B cell (primary cell): ENCODE measurements at regions of chr17 and their contacts with region 1.

Region 1: GRCh38 chr17:63919311-63919723 is 678 bp upstream of the GH1 start:
- DNase-seq: peak; percentile 93
- ATAC-seq: peak; percentile 58
- H3K4me3 ChIP-seq: peak overlapping the region in 3 of 5 experiments; percentile 8 to 26 (median 19)
- H3K4me3 Mint-ChIP-seq: peak overlapping the region; percentile 87
- H3K27ac ChIP-seq: peak overlapping the region in 1 of 2 donors; percentile 18
- H3K27ac Mint-ChIP-seq: peak overlapping the region; percentile 86
- H3K4me1 ChIP-seq: peaks cover 68 to 83% of the 10 kb centered on the region in 2 donors
- H3K4me1 Mint-ChIP-seq: peaks cover 72% of the 10 kb centered on the region
- H3K27me3 ChIP-seq: no peaks in the 10 kb centered on the region
- H3K27me3 Mint-ChIP-seq: no peaks in the 10 kb centered on the region
- CTCF ChIP-seq: peak; percentile 88

Region 2: DNA sequence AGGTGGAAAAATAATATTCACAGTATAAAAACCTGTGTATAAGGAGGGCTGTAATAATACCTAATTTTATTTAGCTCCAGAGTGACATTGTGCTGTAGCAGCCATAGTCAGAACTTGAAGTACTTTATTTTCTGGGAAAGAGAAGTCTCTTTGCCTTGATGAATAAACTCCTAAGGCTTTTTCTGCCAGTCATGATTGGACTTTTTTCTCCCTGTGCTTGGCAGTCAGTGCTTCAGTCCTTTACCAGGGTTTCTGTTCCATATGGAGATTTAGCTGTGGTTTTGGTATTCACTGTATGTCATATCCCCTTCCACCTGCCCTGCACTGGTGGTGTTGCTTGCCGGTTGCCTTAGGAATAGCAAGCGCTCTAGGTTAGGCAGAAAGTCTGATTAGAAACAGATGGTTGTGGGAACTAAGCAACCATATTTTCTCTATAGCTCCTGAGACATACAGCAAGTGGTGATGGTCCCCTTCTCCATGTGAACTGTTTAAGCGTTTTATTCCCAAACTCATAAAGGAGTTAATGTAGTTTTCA is 120.7 kb before region 1 on chr17:
- CTCF ChIA-PET with region 1: no interaction called
- POLR2A ChIA-PET with region 1: no interaction called
- intact Hi-C with region 1: no loop called
- DNase-seq: no peak
- ATAC-seq: no peak
- H3K4me3 ChIP-seq: no peak overlapping the region
- H3K4me3 Mint-ChIP-seq: no peak overlapping the region
- H3K27ac ChIP-seq: no peak overlapping the region
- H3K27ac Mint-ChIP-seq: no peak overlapping the region
- H3K4me1 ChIP-seq: no peaks in the 10 kb centered on the region
- H3K4me1 Mint-ChIP-seq: no peaks in the 10 kb centered on the region
- H3K27me3 ChIP-seq: no peaks in the 10 kb centered on the region
- H3K27me3 Mint-ChIP-seq: no peaks in the 10 kb centered on the region
- CTCF ChIP-seq: no peak

Region 3: DNA sequence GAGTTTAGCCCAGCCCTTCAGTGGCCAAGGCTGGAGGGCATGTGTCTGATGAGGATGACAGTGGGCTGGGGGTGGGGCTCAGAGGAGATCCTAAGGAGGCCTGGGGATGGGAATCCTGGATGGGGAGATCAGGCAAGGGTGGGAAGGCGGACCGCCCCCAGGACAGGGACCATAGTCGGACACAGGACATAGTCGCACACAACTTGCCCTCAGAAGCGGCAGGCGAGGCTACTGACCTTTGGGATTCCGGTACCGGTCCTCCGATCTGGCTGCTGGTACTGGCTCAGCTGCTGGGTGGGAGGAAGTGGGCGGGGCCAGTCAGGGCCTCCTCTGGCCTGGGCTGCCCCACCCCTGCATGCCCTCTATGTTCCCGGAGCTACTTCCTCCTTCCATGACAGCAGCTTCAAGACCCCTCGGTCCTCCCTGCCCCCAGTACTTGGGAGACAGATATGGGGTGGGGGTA is 11.8 kb after region 1 on chr17:
- CTCF ChIA-PET with region 1: interaction called, 185 read pairs
- POLR2A ChIA-PET with region 1: interaction called, 68 read pairs
- intact Hi-C with region 1: loop called (anchors 1 kb)
- DNase-seq: peak; percentile 77
- ATAC-seq: peak; percentile 39
- H3K4me3 ChIP-seq: peak overlapping the region; percentile 80 to 100 (median 97)
- H3K4me3 Mint-ChIP-seq: peak overlapping the region; percentile 99
- H3K27ac ChIP-seq: peak overlapping the region; percentile 83 to 85
- H3K27ac Mint-ChIP-seq: peak overlapping the region; percentile 97
- H3K4me1 ChIP-seq: peaks cover 72 to 85% of the 10 kb centered on the region in 2 donors
- H3K4me1 Mint-ChIP-seq: peaks cover 86% of the 10 kb centered on the region
- H3K27me3 ChIP-seq: no peaks in the 10 kb centered on the region
- H3K27me3 Mint-ChIP-seq: no peaks in the 10 kb centered on the region
- CTCF ChIP-seq: no peak

Region 4: GRCh38 chr17:63946440-63947367 is 27.4 kb after region 1 on chr17:
- CTCF ChIA-PET with region 1: interaction called, 834 read pairs
- POLR2A ChIA-PET with region 1: interaction called, 360 read pairs
- intact Hi-C with region 1: loop called (anchors 1 kb)
- DNase-seq: peak; percentile 87
- ATAC-seq: peak; percentile 70
- H3K4me3 ChIP-seq: peak overlapping the region; percentile 20 to 59 (median 41)
- H3K4me3 Mint-ChIP-seq: peak overlapping the region; percentile 89
- H3K27ac ChIP-seq: peak overlapping the region; percentile 72 to 84
- H3K27ac Mint-ChIP-seq: peak overlapping the region; percentile 99
- H3K4me1 ChIP-seq: peaks cover 35 to 70% of the 10 kb centered on the region in 2 donors
- H3K4me1 Mint-ChIP-seq: peaks cover 46% of the 10 kb centered on the region
- H3K27me3 ChIP-seq: no peaks in the 10 kb centered on the region
- H3K27me3 Mint-ChIP-seq: no peaks in the 10 kb centered on the region
- CTCF ChIP-seq: peak; percentile 92

Region 5: GRCh38 chr17:63984651-63985386 is 65.5 kb after region 1 on chr17:
- CTCF ChIA-PET with region 1: interaction called, 47 read pairs
- POLR2A ChIA-PET with region 1: interaction called, 4 read pairs
- intact Hi-C with region 1: loop called (anchors 2 kb)
- DNase-seq: no peak
- ATAC-seq: peak; percentile 80
- H3K4me3 ChIP-seq: no peak overlapping the region
- H3K4me3 Mint-ChIP-seq: no peak overlapping the region
- H3K27ac ChIP-seq: no peak overlapping the region
- H3K27ac Mint-ChIP-seq: no peak overlapping the region
- H3K4me1 ChIP-seq: peaks cover 8 to 17% of the 10 kb centered on the region in 2 donors
- H3K4me1 Mint-ChIP-seq: peaks cover 19% of the 10 kb centered on the region
- H3K27me3 ChIP-seq: no peaks in the 10 kb centered on the region
- H3K27me3 Mint-ChIP-seq: no peaks in the 10 kb centered on the region
- CTCF ChIP-seq: no peak